ENCODE measurements at regions of chr3 and their contacts with region 1.

Region 1: DNA sequence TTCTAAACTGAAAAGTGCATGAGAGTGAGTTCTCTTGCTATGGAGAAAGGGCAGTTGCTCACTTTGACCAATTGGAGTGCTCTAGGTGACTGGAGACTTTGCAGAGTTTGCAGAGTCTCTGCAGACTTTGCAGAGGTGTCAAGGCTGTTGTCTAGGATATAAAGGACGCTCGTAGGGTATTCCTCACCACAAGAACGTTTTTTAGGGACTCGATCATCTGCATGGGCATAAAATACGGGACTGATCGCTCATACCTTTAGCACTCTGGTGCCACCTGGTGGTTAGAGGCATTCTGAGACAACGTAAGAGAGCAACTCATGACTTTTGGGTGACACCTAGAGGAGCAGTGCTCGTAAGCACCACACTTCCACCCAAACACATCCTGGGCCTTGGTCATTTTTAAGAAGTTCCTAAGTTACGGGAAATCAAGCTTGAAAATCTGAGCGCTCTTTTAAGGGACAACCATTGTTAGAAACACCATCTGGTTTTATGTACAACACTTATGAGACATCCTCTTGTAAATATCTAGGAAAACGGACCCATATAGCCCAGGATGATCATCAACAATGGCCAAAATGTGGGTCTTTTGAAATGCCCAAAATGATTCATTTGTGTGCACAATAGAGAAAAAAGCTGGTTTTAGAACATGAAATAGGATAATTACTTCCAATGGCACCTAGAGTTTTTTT is 51.6 kb upstream of the XCR1 start:
- DNase-seq: peak; percentile 93
- ATAC-seq: peak; percentile 98
- H3K4me3 Mint-ChIP-seq: no peak overlapping the region
- H3K27ac Mint-ChIP-seq: no peak overlapping the region
- H3K4me1 Mint-ChIP-seq: peaks cover 3% of the 10 kb centered on the region
- H3K27me3 Mint-ChIP-seq: peaks cover 23% of the 10 kb centered on the region

Region 2: GRCh38 chr3:45398178-45398577 is 680.7 kb before region 1 on chr3:
- CTCF ChIA-PET with region 1: no interaction called
- POLR2A ChIA-PET with region 1: no interaction called
- intact Hi-C with region 1: no loop called
- DNase-seq: no peak
- ATAC-seq: no peak
- H3K4me3 Mint-ChIP-seq: no peak overlapping the region
- H3K27ac Mint-ChIP-seq: no peak overlapping the region
- H3K4me1 Mint-ChIP-seq: no peaks in the 10 kb centered on the region
- H3K27me3 Mint-ChIP-seq: no peaks in the 10 kb centered on the region

Region 3: GRCh38 chr3:45516829-45517228 is 562.0 kb before region 1 on chr3:
- CTCF ChIA-PET with region 1: no interaction called
- POLR2A ChIA-PET with region 1: no interaction called
- intact Hi-C with region 1: loop called (anchors 5 to 10 kb)
- DNase-seq: no peak
- ATAC-seq: no peak
- H3K4me3 Mint-ChIP-seq: no peak overlapping the region
- H3K27ac Mint-ChIP-seq: no peak overlapping the region
- H3K4me1 Mint-ChIP-seq: no peaks in the 10 kb centered on the region
- H3K27me3 Mint-ChIP-seq: no peaks in the 10 kb centered on the region

Region 4: DNA sequence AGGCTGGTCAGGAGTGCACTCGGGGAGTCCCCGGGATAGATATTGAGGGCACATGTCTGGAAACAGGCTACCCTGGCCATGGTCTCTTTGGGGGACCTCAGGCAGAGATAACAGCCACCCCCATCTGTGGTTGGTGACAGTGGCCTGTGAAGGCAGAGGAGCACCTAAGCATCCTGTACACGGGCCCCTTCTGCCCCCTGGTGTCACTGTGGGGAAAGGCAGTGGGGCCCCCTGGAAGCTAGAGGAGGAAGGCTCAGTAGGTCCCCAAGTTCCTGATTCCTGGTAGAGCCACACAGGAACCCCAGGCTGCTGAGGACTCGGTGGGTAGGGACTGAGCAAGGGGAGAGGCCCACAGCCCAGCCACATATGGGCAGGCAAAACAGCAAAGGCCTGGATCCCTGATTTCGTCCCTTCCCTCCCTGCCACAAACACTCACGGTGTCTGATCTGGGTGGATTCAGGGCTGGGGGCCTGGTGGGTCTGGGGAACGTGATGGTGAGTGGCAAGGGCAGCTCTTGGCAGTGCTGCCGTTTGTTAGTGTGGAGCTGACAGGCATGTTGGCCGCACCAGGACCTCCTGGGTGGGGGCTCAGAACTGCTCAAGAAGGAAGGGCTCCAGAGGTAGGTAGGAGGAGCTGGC is 149.7 kb before region 1 on chr3:
- CTCF ChIA-PET with region 1: interaction called, 35 read pairs
- POLR2A ChIA-PET with region 1: no interaction called
- intact Hi-C with region 1: no loop called
- DNase-seq: peak; percentile 82
- ATAC-seq: peak; percentile 95
- H3K4me3 Mint-ChIP-seq: no peak overlapping the region
- H3K27ac Mint-ChIP-seq: no peak overlapping the region
- H3K4me1 Mint-ChIP-seq: no peaks in the 10 kb centered on the region
- H3K27me3 Mint-ChIP-seq: no peaks in the 10 kb centered on the region

Region 5: DNA sequence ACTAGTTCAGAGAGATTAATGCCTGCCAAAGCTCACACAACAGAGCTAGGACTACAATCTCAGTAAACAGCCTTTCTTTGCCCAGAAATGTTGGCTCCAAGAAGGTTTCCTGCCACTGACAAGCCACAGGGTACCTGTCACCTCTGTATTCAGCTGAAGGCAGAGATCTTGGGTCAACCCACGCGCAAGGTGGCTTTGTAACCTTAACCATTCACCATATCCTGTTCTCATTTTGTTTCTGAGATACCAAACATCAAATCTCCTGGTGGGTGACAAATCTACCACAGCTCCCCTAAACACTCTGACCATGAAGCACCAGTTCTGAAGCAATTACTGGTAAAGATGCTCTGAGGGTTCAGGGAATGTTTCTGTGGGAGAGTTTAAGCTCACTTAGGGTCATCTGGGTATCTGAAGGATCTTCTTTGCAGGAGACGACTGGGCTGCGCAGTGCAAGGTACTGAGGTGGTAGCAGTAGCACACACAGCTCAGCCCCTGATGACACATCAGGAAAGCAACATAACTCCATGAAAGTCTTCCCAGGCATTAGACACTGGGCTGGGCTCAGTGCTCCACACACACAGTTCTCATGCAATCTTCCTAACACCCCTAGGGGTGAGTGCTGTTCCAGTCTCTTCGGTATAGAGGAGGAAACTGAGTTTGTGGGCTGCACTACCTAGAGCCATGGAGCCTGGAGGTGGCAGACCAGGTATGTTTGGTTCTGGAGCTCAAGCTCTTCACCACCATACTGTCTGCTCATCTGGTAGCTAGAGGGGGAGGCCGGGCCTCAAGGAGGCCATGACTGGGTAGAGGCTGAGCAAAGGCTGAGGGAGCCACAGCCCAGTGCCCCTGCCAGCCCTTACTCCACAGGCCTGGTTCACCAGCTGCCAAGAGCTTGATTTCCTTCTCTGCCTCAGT is 127.9 kb before region 1 on chr3:
- CTCF ChIA-PET with region 1: interaction called, 269 read pairs
- POLR2A ChIA-PET with region 1: no interaction called
- intact Hi-C with region 1: no loop called
- DNase-seq: peak; percentile 83
- ATAC-seq: peak; percentile 85
- H3K4me3 Mint-ChIP-seq: no peak overlapping the region
- H3K27ac Mint-ChIP-seq: peak overlapping the region; percentile 22
- H3K4me1 Mint-ChIP-seq: peaks cover 45% of the 10 kb centered on the region
- H3K27me3 Mint-ChIP-seq: peaks cover 3% of the 10 kb centered on the region

Region 6: GRCh38 chr3:46065294-46065721 is 13.5 kb before region 1 on chr3:
- CTCF ChIA-PET with region 1: interaction called, 71 read pairs
- POLR2A ChIA-PET with region 1: no interaction called
- intact Hi-C with region 1: no loop called
- DNase-seq: peak; percentile 83
- ATAC-seq: peak; percentile 92
- H3K4me3 Mint-ChIP-seq: no peak overlapping the region
- H3K27ac Mint-ChIP-seq: no peak overlapping the region
- H3K4me1 Mint-ChIP-seq: peaks cover 68% of the 10 kb centered on the region
- H3K27me3 Mint-ChIP-seq: peaks cover 57% of the 10 kb centered on the region

Region 7: DNA sequence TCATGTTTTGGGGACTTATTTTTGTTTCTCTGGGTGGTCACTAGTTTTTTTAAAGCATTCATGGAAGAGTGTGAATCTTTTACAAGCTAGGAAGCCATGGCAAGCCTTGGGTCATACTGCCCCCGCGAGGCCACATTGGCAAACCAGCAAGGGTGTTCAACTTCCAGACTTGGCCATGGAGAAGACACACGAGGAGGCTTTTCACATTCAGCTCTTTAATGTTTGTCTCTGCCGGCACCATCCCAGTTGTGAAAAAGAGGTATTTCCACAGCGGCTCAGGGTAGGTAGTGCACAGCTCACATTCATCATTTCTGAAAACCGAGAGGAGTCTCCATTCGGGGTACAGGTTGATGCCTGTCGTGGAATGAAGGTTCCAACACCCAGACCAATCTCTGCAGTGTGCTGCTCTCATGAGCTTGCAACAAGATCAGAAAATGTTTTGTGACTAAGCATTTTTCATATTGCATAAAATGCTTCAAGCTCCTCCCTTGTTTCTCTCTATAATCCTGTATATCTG is 299.6 kb after region 1 on chr3:
- CTCF ChIA-PET with region 1: interaction called, 10 read pairs
- POLR2A ChIA-PET with region 1: no interaction called
- intact Hi-C with region 1: loop called in 1 of 2 experiments (anchors 1 kb)
- DNase-seq: peak; percentile 84
- ATAC-seq: peak; percentile 53
- H3K4me3 Mint-ChIP-seq: no peak overlapping the region
- H3K27ac Mint-ChIP-seq: no peak overlapping the region
- H3K4me1 Mint-ChIP-seq: peaks cover 28% of the 10 kb centered on the region
- H3K27me3 Mint-ChIP-seq: peaks cover 22% of the 10 kb centered on the region

Measured in activated CD4-positive, alpha-beta T cell treated with anti-CD3 and anti-CD28 coated beads for 36 hours (primary cell).